Lower lobe of right lung (tissue), 2 donors: ENCODE measurements at regions of chr6 and their contacts with region 1.

Region 1: DNA sequence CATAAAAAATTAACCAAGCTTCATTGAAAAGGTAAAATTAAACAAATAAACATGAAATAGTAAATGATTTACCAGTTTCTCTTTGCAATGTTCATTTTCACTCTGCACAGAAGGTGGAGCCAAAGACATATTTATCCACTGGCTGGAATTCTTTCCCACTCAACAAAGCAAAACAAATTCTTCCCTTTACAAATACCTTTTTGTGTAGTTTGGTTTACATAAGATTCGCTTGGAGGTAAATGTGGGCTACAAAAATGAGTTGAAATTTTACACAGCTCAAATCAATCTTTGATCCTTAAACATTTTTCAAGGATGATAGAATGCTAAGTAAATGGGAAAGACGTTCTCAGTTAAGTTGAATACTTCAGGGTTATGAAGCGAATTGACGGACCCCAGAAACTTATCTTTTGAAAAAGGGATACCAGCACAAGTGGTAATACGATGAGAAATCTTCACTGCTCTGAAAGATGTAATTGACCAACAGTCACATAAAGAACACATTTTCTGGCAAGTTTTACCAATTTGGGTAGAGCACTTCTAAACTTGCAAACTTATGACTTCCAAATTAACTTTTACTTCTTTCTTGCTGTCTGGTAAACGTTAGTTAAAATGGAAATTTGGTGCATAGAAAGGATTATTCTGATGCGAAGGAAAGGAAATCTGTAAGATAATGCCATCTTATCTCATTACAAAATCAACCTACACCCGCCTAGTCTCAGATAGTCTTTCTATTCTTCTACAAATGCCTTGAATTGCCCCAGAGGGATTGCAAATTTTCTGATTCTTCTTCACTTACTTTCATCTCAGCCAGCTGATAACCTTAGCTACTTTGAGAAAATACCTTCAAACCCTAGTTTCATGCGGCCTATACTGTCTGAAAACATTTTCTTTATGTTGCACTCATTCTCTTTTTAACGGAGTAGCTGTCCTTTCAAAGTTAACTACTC is 4.7 kb upstream of the GJA1 start:
- DNase-seq: no peak
- ATAC-seq: peak in 1 of 2 donors; percentile 70
- H3K4me3 ChIP-seq: peak overlapping the region; percentile 15
- H3K27ac ChIP-seq: no peak overlapping the region
- H3K4me1 ChIP-seq: no peaks in the 10 kb centered on the region
- H3K27me3 ChIP-seq: no peaks in the 10 kb centered on the region
- CTCF ChIP-seq: peak; percentile 68

Region 2: DNA sequence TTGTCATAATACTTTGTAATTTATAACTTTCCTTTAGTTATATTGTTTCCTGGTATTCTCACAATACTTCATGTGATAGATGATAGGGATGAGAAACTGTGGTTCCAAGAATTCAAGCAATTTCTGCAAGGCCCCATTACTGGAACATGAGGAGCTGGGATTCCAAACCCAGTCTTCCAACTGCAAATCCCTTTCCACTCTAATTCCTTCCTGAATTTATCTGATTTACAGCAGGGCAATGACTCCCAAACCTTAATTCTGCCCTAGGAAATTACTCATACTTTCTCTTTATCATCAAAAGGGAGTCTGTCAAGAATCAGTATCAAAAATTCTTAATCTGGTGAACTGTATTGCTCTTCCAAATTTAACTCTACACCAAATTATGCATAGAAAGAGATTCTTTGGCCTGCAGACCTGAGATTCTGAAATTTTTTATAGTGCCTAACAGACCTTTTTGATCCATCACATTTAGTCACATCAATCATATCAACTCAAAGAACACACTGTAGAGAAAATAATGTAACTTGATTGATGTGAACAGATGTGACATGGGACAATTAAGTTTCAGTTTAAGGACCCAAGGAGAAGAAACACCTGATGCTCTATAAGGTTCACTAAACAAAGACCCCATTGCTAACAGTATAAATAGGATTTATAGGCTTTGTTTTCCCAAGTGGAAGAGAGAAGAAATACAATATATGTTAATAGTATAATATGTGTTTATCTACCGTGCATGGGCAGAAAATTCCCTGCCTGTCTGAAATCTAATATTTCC is 36.9 kb before region 1 on chr6:
- intact Hi-C with region 1: no loop called
- DNase-seq: no peak
- ATAC-seq: no peak
- H3K4me3 ChIP-seq: no peak overlapping the region
- H3K27ac ChIP-seq: no peak overlapping the region
- H3K4me1 ChIP-seq: no peaks in the 10 kb centered on the region
- H3K27me3 ChIP-seq: no peaks in the 10 kb centered on the region
- CTCF ChIP-seq: no peak

Region 3: DNA sequence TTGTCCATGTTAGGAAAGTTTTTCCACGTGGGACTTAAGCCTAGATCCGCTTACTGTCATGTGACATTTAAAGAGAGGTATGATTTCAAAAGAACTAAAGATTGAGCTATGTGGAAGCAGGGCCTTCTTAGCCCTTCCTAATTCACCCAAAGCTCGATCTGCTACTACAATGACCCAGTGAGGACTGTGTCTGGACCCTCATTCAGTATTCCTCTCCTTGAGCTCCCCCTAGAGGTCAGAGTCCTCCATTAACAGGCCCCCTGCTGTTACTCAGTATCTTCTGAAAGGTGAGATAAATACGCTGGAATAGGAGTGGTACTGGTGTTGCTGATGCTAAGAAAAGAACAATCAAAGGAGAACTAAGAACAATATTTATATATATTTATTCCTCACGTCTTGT is 418.7 kb after region 1 on chr6:
- intact Hi-C with region 1: loop called (anchors 10 kb)
- DNase-seq: no peak
- ATAC-seq: peak; percentile 78 to 88
- H3K4me3 ChIP-seq: no peak overlapping the region
- H3K27ac ChIP-seq: no peak overlapping the region
- H3K4me1 ChIP-seq: no peaks in the 10 kb centered on the region
- H3K27me3 ChIP-seq: no peaks in the 10 kb centered on the region
- CTCF ChIP-seq: peak; percentile 74

Region 4: GRCh38 chr6:122033539-122034181 is 602.9 kb after region 1 on chr6:
- intact Hi-C with region 1: loop called (anchors 5 kb)
- DNase-seq: no peak
- ATAC-seq: peak; percentile 90 to 93
- H3K4me3 ChIP-seq: no peak overlapping the region
- H3K27ac ChIP-seq: no peak overlapping the region
- H3K4me1 ChIP-seq: peaks cover 6% of the 10 kb centered on the region
- H3K27me3 ChIP-seq: no peaks in the 10 kb centered on the region
- CTCF ChIP-seq: peak; percentile 57

Region 5: GRCh38 chr6:122184401-122184827 is 753.6 kb after region 1 on chr6:
- intact Hi-C with region 1: loop called (anchors 10 kb)
- DNase-seq: no peak
- ATAC-seq: peak in 1 of 2 donors; percentile 87
- H3K4me3 ChIP-seq: no peak overlapping the region
- H3K27ac ChIP-seq: no peak overlapping the region
- H3K4me1 ChIP-seq: no peaks in the 10 kb centered on the region
- H3K27me3 ChIP-seq: no peaks in the 10 kb centered on the region
- CTCF ChIP-seq: peak; percentile 40